Tibial artery (tissue), 4 donors: ENCODE measurements at regions of chr17 and their contacts with region 1.

Region 1: GRCh38 chr17:29219378-29220047 is 27.1 kb upstream of the CRYBA1 start:
- DNase-seq: peak; percentile 71 to 86
- H3K4me3 ChIP-seq: no peak overlapping the region
- H3K27ac ChIP-seq: no peak overlapping the region
- H3K4me1 ChIP-seq: peaks cover 0 to 9% (median 3%) of the 10 kb centered on the region in 4 donors
- H3K27me3 ChIP-seq: no peaks in the 10 kb centered on the region
- CTCF ChIP-seq: peak; percentile 92 to 94

Region 2: DNA sequence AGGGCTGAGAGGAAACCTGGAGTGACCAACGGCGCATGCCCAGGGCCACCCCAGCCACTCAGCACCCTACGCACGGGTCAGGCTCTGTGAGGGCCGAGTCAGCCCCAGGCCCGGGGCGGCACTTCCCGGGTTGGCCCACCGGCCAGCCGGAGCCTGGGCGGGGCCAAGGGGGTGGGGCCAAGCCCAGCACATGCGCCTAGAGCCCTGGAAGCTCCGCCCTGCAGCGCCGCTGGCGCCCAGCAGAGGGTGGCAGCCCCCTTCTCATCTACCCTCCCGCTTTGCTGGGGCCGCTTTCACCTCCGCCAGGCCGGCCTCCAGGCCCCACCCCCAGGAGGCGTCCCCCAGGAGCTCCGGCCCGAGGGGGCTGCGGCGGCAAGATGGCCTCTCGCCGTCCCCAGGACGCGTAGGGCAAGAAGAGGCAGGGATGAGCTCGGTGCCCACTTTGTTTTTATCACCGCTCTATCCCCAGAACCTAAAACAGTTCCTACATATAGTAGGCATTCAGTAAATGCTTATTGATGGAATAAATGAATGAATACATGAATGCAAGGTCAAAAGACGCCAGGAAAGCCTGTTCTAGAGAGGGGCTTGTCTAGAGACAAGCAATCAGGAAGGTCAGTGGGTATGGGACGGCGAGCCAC is 70.6 kb before region 1 on chr17:
- intact Hi-C with region 1: loop called (anchors 2 kb)
- DNase-seq: peak; percentile 93 to 97
- H3K4me3 ChIP-seq: peak overlapping the region; percentile 50 to 62
- H3K27ac ChIP-seq: peak overlapping the region; percentile 69 to 84
- H3K4me1 ChIP-seq: peaks cover 0 to 28% (median 12%) of the 10 kb centered on the region in 4 donors
- H3K27me3 ChIP-seq: no peaks in the 10 kb centered on the region
- CTCF ChIP-seq: peak; percentile 98